ENCODE measurements at regions of chr3 and their contacts with region 1.

Region 1: GRCh38 chr3:184314363-184314699 is at the start of gene EIF4G1:
- DNase-seq: peak; percentile 86 to 96 (median 93)
- H3K4me3 ChIP-seq: peak within 1 kb of the TSS; percentile 44 to 88 (median 81)
- H3K27ac ChIP-seq: peak within 1 kb of the TSS; percentile 7 to 97 (median 92)
- H3K27me3 ChIP-seq: no peaks in the 10 kb centered on the region
- CTCF ChIP-seq: peak in 10 of 56 donors; percentile 5 to 28 (median 15)
- total RNA-seq, gene EIF4G1: 152 to 287 (median 190) TPM

Region 2: DNA sequence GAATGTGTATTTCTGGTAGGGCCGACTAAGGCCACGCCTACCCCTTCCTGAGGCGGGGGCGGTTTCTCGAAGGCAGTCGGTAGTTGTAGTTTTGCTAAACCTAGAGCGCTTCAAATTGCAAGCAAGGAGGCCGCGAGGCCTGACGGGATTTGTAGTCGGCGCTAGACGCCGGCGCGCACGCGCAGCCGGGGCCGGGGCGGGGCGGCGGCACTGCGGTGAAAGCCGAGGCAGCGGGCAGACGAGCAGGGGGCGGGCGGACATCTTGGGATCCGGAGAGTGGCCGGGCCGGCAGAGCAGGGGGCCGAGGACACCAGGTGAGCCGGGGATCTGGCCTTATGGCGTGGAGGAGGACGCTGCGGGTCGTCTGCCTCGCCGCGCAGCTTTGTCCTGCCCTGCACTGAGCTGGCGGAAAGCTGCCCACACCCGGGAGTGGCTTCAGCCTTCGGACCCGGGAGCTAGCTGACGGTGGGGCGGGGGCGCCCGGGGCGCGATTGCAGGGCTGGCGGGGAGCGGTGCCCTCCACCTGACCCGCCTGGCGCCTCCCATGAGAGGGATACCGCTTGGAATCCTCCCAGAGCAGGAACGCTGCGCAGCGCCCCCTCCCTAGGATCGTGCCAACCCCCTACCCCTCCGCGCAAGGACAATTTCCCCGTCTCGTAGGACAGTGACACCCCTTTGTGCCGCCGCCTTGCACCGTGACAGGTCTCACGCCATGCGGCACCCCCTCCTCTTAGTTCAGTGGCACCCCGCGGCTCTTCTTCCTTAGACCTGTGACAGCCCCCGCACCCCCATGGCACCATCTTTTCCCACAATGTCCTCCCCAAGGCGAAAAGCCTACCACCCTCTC is 139.5 kb before region 1 on chr3 and contains the start of gene AP2M1:
- intact Hi-C with region 1: loop called in 1 of 2 experiments (anchors 5 kb)
- DNase-seq: peak; percentile 96 to 100 (median 99)
- H3K4me3 ChIP-seq: peak within 1 kb of the TSS; percentile 75 to 100 (median 99)
- H3K27ac ChIP-seq: peak within 1 kb of the TSS; percentile 61 to 99 (median 95)
- H3K27me3 ChIP-seq: no peaks in the 10 kb centered on the region
- CTCF ChIP-seq: peak in 23 of 56 donors; percentile 2 to 51 (median 18)
- total RNA-seq, gene AP2M1: 297 to 743 (median 543) TPM

Region 3: GRCh38 chr3:184362668-184363540 is 48.6 kb after region 1 on chr3:
- intact Hi-C with region 1: loop called in 1 of 2 experiments (anchors 1 kb)
- DNase-seq: peak; percentile 90 to 96 (median 94)
- H3K4me3 ChIP-seq: peak overlapping the region; percentile 65 to 98 (median 91)
- H3K27ac ChIP-seq: peak overlapping the region; percentile 93 to 100 (median 99)
- H3K27me3 ChIP-seq: no peaks in the 10 kb centered on the region
- CTCF ChIP-seq: peak; percentile 19 to 84 (median 67)

Measured in dorsolateral prefrontal cortex (tissue), 120 donors.